Ascending aorta (tissue), 2 donors: ENCODE measurements at regions of chr12 and their contacts with region 1.

Region 1: DNA sequence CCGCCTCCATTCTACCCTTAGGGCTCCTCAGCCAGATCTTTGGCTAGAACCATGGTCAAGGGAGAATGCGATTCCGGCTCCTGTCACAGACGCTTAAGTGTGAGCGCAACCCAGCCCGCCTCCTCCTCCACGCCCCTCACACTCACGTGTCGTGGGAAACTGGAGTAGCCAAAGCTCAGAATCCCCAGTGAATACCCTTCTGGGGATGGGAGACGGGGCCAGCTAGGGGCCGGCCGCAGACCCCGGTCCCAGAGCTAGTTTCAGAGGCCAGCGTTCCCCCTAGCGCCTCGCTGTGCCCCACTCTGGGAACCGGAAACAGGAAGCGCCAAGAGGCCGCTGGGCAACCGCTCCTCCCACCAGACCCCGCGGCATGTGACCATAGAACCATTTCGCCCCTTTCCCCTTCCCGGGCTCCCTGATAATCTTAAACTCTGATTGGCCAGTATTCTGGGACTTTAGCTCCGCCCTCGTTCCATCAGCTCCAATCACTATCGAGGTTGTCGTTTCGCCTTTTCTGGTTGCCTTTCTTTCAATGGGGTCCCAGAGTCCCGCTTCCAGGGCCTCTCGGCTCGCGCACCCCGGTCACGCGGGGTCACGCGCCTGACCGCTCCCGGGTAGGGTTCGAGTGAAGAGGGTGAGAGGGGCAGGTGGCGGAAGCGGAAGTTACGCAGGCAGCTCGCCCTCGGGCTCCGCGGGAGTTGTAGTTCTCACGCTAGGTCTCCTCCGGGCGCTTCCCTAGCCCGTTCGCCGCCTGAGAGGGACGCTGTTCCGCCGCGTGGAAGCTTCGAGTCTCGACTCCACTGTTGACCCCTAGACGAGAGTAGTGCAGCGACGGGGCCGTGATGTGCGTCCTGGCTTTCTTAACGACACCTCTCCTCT is at the start of gene M6PR:
- DNase-seq: peak; percentile 76 to 96
- H3K4me3 ChIP-seq: peak within 1 kb of the TSS; percentile 78 to 83
- H3K27ac ChIP-seq: peak within 1 kb of the TSS; percentile 96 to 100
- H3K4me1 ChIP-seq: peaks cover 0 to 22% of the 10 kb centered on the region in 2 donors
- H3K27me3 ChIP-seq: no peaks in the 10 kb centered on the region
- CTCF ChIP-seq: peak; percentile 36 to 63 (median 48)
- total RNA-seq, gene M6PR: 72.2 TPM

Region 2: GRCh38 chr12:8032242-8033152 is 917.1 kb before region 1 on chr12 and contains the start of gene FOXJ2:
- intact Hi-C with region 1: loop called (anchors 10 kb)
- DNase-seq: peak in 1 of 2 donors; percentile 89
- H3K4me3 ChIP-seq: peak within 1 kb of the TSS; percentile 81 to 83
- H3K27ac ChIP-seq: peak within 1 kb of the TSS; percentile 97 to 99
- H3K4me1 ChIP-seq: peaks cover 14 to 21% of the 10 kb centered on the region in 2 donors
- H3K27me3 ChIP-seq: no peaks in the 10 kb centered on the region
- CTCF ChIP-seq: no peak
- total RNA-seq, gene FOXJ2: 17.1 TPM

Region 3: DNA sequence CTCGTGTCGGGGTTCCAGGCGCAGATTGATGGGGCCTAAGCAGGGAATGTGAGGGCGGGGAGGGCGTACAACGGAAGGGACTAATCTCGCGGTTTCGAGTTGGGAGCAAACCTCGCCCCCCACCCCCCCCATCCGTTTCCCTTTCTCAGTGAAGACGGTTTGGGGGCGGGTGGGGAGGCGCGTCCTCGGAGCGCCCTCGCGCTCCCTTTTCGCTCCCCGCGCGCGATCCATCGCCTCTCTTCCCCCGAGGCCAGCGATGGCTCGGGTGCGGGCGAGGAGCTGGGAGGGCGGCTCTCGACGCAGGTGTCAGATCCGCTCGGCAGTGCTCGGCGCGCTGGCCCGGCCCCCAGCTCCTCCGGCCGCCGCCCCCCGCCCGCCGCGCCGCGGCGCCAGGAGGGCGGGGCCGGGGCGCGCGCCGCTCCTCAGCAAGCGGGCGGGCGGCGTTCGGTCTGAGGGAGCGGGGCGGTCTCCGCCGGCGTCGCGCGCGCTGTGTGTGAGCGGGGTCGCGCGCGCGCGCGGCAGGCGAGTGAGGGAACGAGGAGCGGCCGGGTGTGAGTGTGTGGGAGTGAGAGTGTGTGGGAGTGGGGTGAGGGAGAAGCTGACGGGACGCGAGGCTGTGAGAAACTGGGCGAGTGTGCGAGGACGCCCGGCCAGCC is 252.0 kb before region 1 on chr12 and contains the start of gene RIMKLB:
- intact Hi-C with region 1: loop called (anchors 5 kb)
- DNase-seq: peak; percentile 33 to 93
- H3K4me3 ChIP-seq: peak within 1 kb of the TSS; percentile 81 to 92
- H3K27ac ChIP-seq: peak within 1 kb of the TSS; percentile 97 to 99
- H3K4me1 ChIP-seq: peaks cover 2 to 20% of the 10 kb centered on the region in 2 donors
- H3K27me3 ChIP-seq: no peaks in the 10 kb centered on the region
- CTCF ChIP-seq: no peak
- total RNA-seq, gene RIMKLB: 26.0 TPM

Region 4: DNA sequence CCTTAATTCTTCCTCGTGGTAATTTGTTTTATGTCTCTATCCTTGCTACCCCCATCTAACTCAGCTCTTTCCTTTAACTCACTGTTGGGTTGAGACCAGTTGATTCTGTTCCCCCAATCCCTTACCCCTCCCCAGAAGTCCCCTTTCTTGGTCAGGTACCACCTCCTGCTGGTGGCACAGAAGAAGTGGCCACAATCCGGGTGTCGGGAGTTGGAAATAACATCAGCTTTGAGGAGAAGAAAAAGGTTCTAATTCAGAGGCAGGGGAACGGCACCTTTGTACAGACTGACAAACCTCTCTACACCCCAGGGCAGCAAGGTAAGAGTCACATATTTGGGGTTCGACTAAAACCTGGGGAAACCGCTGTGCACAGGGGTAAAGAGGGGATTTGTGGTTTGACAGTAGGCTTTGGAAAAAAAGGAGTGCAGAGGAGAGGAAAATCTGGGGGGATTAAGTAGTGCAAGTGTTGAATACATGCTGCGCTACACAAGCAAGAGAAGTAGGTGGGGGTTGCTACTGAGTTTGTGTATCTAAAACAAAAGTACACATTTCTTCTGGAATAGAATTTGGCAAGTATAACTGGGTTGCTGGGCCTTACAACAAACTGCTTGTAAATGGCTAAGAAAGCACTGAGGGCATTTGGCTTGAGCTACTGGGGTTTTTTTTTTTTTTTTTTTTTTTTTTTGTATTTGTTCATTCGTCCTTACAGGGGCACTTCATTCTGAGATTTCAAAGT is 125.8 kb before region 1 on chr12:
- intact Hi-C with region 1: no loop called
- DNase-seq: no peak
- H3K4me3 ChIP-seq: no peak overlapping the region
- H3K27ac ChIP-seq: no peak overlapping the region
- H3K4me1 ChIP-seq: no peaks in the 10 kb centered on the region
- H3K27me3 ChIP-seq: no peaks in the 10 kb centered on the region
- CTCF ChIP-seq: peak; percentile 73 to 89 (median 73)

Region 5: GRCh38 chr12:8914716-8915526 is 34.7 kb before region 1 on chr12:
- intact Hi-C with region 1: loop called (anchors 1 kb)
- DNase-seq: peak in 1 of 2 donors; percentile 68
- H3K4me3 ChIP-seq: peak overlapping the region; percentile 64
- H3K27ac ChIP-seq: peak overlapping the region; percentile 91 to 95
- H3K4me1 ChIP-seq: peaks cover 0 to 17% of the 10 kb centered on the region in 2 donors
- H3K27me3 ChIP-seq: no peaks in the 10 kb centered on the region
- CTCF ChIP-seq: no peak

Region 6: DNA sequence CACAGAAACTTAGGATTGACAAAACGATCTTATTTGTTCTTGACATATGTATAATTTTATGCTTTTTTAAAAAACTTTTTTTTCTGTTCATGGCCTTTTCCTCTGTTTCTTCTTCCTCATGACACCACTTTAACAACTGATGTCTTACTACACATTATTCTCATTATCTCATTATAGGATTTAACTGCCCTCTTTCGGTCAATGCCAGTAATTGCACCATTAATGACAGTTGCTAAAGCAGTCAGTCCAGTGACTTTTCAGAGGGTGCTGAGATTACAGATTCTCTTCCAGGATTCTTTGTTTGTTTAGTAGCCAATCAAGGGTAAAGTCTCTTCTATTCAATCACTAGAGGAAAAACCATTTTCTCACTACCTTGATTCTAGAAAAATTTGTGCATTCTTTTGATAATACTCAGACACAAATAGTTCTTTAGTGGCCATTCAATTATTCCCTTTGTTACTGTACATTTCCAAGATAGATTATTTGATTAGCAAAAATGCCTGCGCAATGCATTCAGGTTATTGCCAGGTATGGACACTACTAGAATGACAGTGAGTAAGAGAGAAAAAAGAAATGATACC is 89.9 kb after region 1 on chr12:
- intact Hi-C with region 1: loop called (anchors 2 kb)
- DNase-seq: no peak
- H3K4me3 ChIP-seq: no peak overlapping the region
- H3K27ac ChIP-seq: no peak overlapping the region
- H3K4me1 ChIP-seq: no peaks in the 10 kb centered on the region
- H3K27me3 ChIP-seq: no peaks in the 10 kb centered on the region
- CTCF ChIP-seq: peak; percentile 39 to 71 (median 67)

Region 7: GRCh38 chr12:9064201-9064814 is 114.7 kb after region 1 on chr12:
- intact Hi-C with region 1: loop called (anchors 2 kb)
- DNase-seq: peak in 1 of 2 donors; percentile 82
- H3K4me3 ChIP-seq: peak overlapping the region; percentile 70 to 99
- H3K27ac ChIP-seq: peak overlapping the region; percentile 98 to 100
- H3K4me1 ChIP-seq: peaks cover 0 to 15% of the 10 kb centered on the region in 2 donors
- H3K27me3 ChIP-seq: no peaks in the 10 kb centered on the region
- CTCF ChIP-seq: peak; percentile 36 to 59 (median 38)

Region 8: GRCh38 chr12:9118158-9118557 is 168.6 kb after region 1 on chr12:
- intact Hi-C with region 1: loop called (anchors 5 kb)
- DNase-seq: peak; percentile 30 to 70
- H3K4me3 ChIP-seq: peak overlapping the region; percentile 34 to 69
- H3K27ac ChIP-seq: peak overlapping the region; percentile 80 to 85
- H3K4me1 ChIP-seq: peaks cover 3 to 32% of the 10 kb centered on the region in 2 donors
- H3K27me3 ChIP-seq: no peaks in the 10 kb centered on the region
- CTCF ChIP-seq: no peak

Region 9: GRCh38 chr12:9149372-9149771 is 199.8 kb after region 1 on chr12:
- intact Hi-C with region 1: no loop called
- DNase-seq: no peak
- H3K4me3 ChIP-seq: no peak overlapping the region
- H3K27ac ChIP-seq: no peak overlapping the region
- H3K4me1 ChIP-seq: no peaks in the 10 kb centered on the region
- H3K27me3 ChIP-seq: no peaks in the 10 kb centered on the region
- CTCF ChIP-seq: no peak